ENCODE measurements at regions of chr1 and their contacts with region 1.

Region 1: DNA sequence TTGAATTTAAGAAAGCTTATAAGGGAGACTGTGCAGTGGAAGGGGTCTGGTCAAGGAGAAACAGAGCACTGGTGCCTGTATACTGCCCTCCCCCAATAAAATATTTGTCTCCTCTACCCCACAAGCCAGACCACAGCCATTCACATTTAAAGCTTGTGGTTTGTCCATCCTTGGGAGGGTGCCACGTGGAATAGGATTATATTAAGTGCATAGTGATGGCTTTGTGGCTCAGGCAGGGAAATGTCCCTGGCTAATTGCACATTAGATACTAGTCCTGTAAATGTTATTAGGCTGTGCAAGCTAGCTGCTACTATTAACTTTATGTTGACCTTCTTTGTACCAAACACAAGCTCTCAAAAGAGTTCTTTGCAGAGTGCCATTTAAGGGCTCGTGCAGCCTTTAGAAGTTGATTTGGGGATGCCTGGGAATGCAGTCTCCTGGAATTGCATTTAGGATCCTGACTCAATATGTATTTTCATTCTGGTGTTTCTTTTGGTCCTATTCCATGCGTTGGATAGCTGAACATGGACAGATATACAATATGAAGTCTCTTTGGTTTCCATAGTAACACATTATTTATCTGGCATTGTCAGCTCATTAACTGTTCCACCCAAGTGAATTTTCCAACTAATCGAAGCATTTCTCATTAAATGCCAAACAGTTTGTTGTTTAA is 210.6 kb downstream of the ROR1 start:
- DNase-seq: no peak
- H3K4me3 Mint-ChIP-seq: no peak overlapping the region
- H3K27ac Mint-ChIP-seq: peak overlapping the region; percentile 84
- H3K4me1 Mint-ChIP-seq: peaks cover 30% of the 10 kb centered on the region
- H3K27me3 Mint-ChIP-seq: no peaks in the 10 kb centered on the region
- CTCF ChIP-seq: no peak

Region 2: DNA sequence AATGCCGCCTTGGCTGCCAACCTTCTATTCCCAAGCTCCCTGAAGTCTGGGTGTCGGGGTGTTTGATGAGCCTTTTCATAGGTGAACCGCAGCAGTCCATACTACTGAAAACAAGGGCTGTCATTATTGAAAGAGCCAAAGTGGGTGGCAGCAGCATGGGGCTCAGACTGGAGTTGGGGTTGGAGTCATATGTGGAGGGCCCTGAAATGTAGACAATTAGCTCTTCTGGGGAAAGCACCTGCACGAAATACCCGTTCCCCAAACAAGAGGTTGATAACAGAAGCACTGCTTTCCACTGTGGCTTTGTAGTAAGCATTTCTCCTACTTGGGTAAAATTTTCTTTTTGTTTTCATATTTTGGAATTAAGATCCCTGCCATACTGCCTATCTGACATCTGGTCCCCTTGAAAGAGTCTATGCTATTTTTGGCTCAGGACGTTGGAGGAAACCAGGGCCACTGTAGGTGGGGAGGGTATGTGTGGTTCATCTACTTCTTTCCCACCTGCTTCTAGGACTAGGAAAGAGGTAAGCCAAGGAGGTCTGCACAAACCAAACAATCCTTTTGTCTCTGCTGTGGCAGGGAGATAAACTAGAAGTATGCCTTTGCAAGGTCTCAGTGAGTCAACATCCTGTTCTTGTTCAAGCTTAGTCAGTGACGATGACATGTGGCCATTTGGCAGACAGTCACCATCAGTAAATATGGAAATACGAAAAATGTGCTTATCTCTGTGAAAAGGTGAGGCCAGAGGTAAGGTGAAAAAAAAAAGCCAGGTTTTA is 22.1 kb after region 1 on chr1:
- CTCF ChIA-PET with region 1: no interaction called
- POLR2A ChIA-PET with region 1: interaction called, 14 read pairs
- intact Hi-C with region 1: no loop called
- DNase-seq: peak; percentile 78
- H3K4me3 Mint-ChIP-seq: no peak overlapping the region
- H3K27ac Mint-ChIP-seq: peak overlapping the region; percentile 76
- H3K4me1 Mint-ChIP-seq: peaks cover 30% of the 10 kb centered on the region
- H3K27me3 Mint-ChIP-seq: no peaks in the 10 kb centered on the region
- CTCF ChIP-seq: no peak

Measured in MCF 10A (cell line).